ENCODE measurements at regions of chrX and their contacts with region 1.

Region 1: GRCh38 chrX:2145692-2146367 is 354.9 kb downstream of the DHRSX start:
- DNase-seq: no peak
- ATAC-seq: no peak
- H3K4me3 ChIP-seq: no peak overlapping the region
- H3K27ac ChIP-seq: no peak overlapping the region
- H3K4me1 ChIP-seq: no peaks in the 10 kb centered on the region
- H3K27me3 ChIP-seq: no peaks in the 10 kb centered on the region
- CTCF ChIP-seq: no peak
- EP300 ChIP-seq: no peak
- POLR2A ChIP-seq: no peak
- RAD21 ChIP-seq: no peak

Region 2: DNA sequence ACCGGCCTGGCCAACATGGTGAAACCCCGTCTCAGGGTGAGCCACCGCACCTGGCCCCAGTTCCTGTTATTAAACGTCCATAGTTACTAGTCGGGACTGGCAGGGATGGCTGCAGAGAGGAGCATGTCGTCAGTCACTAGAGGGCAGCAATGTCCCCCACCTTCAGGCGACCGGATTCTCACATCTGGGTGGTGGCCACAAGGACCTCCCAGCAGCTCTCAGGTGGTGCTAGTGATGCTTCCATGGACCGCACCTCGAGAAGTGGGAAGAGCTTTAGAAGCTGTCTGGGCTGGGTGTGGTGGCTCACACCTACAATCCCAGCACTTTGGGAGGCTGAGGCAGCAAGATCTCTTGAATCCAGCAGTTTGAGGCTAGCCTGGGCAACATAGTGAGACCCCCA is 822.5 kb before region 1 on chrX:
- CTCF ChIA-PET with region 1: no interaction called
- POLR2A ChIA-PET with region 1: no interaction called
- in situ Hi-C with region 1: loop called (anchors 25 kb)
- intact Hi-C with region 1: no loop called
- DNase-seq: peak; percentile 33 to 57 (median 45)
- ATAC-seq: peak; percentile 95
- H3K4me3 ChIP-seq: no peak overlapping the region
- H3K27ac ChIP-seq: no peak overlapping the region
- H3K4me1 ChIP-seq: no peaks in the 10 kb centered on the region
- H3K27me3 ChIP-seq: no peaks in the 10 kb centered on the region
- CTCF ChIP-seq: peak; percentile 49 to 53 (median 51)
- EP300 ChIP-seq: no peak
- POLR2A ChIP-seq: no peak
- RAD21 ChIP-seq: peak in 1 of 2 experiments; percentile 53; a peak in 2 of 4 replicates

Region 3: GRCh38 chrX:2251211-2251610 is 105.4 kb after region 1 on chrX:
- CTCF ChIA-PET with region 1: no interaction called
- POLR2A ChIA-PET with region 1: no interaction called
- in situ Hi-C with region 1: no loop called
- intact Hi-C with region 1: no loop called
- DNase-seq: no peak
- ATAC-seq: no peak
- H3K4me3 ChIP-seq: no peak overlapping the region
- H3K27ac ChIP-seq: no peak overlapping the region
- H3K4me1 ChIP-seq: peaks cover 6% of the 10 kb centered on the region in 2 experiments; a peak in 3 of 5 replicates
- H3K27me3 ChIP-seq: no peaks in the 10 kb centered on the region
- CTCF ChIP-seq: no peak
- EP300 ChIP-seq: no peak
- POLR2A ChIP-seq: no peak
- RAD21 ChIP-seq: no peak

Measured in K562 (cell line).